ENCODE measurements at regions of chr1 and their contacts with region 1.

Region 1: DNA sequence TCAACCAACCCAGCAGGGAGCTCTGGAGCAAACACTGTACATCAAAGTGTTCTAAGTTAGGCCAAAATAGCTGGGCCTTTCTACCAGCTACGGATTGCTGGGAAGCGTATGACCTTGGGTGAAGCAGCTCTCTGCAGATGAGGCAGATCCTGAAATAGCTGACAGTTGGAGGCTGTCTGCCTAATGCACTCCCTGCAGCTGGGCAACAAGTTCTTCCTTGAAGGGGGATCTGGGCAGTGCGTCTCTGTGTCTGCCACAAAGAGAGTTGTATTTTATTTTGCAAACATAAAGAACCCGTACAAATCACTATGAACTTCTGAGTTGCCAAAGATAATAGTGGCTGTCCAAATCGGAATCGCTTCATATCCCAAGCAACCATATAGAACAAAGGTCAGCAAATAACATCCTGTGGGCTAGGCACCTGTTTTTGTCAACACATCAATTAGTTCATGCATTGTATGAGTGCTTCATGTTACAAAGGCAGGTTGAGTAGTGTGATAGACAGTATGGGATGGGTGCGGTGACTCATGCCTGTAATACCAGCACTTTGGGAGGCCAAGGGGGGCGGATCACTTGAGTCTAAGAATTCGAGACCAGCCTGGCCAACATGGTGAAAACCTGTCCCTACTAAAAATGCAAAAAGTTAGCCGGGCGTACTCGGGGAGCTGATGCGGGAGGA is 29.1 kb upstream of the KLF17 start:
- DNase-seq: no peak
- ATAC-seq: 0 out of 2 replicates have a peak, but pooled peaks have one; percentile 14
- H3K4me3 ChIP-seq: no peak overlapping the region
- H3K27ac ChIP-seq: no peak overlapping the region
- H3K4me1 ChIP-seq: no peaks in the 10 kb centered on the region
- H3K27me3 ChIP-seq: peaks cover 2% of the 10 kb centered on the region; the same call in 1 of the 2 replicates
- CTCF ChIP-seq: no peak
- POLR2A ChIP-seq: no peak
- RAD21 ChIP-seq: no peak

Region 2: GRCh38 chr1:44105810-44106209 is 16.3 kb after region 1 on chr1:
- CTCF ChIA-PET with region 1: interaction called, 5 read pairs
- POLR2A ChIA-PET with region 1: no interaction called
- dilution Hi-C with region 1: no loop called
- in situ Hi-C with region 1: no loop called
- intact Hi-C with region 1: loop called (anchors 1 kb)
- DNase-seq: no peak
- ATAC-seq: no peak
- H3K4me3 ChIP-seq: no peak overlapping the region
- H3K27ac ChIP-seq: no peak overlapping the region
- H3K4me1 ChIP-seq: no peaks in the 10 kb centered on the region
- H3K27me3 ChIP-seq: no peaks in the 10 kb centered on the region; the same call in 1 of the 2 replicates
- CTCF ChIP-seq: no peak
- POLR2A ChIP-seq: no peak
- RAD21 ChIP-seq: no peak

Region 3: DNA sequence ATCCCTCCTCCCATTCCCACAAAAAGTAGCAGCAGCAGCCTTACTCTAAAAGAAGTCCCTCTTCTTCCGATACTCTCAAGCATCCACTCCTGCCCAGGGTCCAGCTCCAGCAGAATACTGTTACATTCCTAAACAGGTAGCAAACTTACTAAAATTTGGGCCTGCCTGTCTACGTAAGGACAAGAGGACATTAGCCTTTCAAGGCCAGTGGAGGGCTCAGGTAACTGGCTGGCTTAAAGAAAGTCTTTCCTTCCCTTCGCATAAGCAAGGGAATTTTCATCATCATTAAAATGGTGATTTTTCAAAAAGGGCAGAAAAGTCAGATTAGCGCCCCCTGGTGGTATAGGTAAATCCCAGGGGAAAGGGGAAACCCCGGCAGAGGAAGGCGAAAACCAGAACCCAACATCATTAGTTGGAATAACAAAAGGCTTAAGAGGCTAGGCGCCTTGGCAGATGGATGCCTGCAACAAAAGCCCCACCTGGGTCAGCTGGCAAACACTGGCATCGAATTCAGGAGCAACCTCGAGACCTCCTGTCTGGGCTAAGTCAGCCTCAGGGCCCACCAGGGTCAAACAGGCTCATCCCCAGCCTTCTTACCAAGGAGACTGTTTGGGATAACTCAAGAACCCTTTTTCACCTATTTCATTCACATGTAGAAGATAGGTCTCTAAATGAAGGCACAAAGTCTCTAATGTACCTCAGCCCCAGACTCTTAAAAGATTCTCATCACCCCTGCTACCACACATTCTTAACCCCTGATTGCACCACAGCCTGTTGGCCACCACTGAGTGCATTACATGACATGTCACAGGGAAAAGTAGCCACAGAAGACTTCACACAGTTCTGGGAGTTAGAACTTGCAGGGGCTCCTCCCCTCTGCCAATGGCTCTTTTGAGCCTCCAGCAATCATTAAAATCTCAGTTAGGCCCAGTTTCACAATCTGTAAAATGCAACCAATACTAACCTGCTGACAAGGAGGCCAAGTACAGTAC is 228.9 kb after region 1 on chr1:
- CTCF ChIA-PET with region 1: no interaction called
- POLR2A ChIA-PET with region 1: no interaction called
- dilution Hi-C with region 1: no loop called
- in situ Hi-C with region 1: no loop called
- intact Hi-C with region 1: loop called (anchors 5 kb)
- DNase-seq: peak; percentile 23
- ATAC-seq: peak; percentile 68
- H3K4me3 ChIP-seq: no peak overlapping the region
- H3K27ac ChIP-seq: no peak overlapping the region
- H3K4me1 ChIP-seq: no peaks in the 10 kb centered on the region
- H3K27me3 ChIP-seq: no peaks in the 10 kb centered on the region
- CTCF ChIP-seq: peak; percentile 74
- POLR2A ChIP-seq: no peak
- RAD21 ChIP-seq: peak; percentile 56

Region 4: DNA sequence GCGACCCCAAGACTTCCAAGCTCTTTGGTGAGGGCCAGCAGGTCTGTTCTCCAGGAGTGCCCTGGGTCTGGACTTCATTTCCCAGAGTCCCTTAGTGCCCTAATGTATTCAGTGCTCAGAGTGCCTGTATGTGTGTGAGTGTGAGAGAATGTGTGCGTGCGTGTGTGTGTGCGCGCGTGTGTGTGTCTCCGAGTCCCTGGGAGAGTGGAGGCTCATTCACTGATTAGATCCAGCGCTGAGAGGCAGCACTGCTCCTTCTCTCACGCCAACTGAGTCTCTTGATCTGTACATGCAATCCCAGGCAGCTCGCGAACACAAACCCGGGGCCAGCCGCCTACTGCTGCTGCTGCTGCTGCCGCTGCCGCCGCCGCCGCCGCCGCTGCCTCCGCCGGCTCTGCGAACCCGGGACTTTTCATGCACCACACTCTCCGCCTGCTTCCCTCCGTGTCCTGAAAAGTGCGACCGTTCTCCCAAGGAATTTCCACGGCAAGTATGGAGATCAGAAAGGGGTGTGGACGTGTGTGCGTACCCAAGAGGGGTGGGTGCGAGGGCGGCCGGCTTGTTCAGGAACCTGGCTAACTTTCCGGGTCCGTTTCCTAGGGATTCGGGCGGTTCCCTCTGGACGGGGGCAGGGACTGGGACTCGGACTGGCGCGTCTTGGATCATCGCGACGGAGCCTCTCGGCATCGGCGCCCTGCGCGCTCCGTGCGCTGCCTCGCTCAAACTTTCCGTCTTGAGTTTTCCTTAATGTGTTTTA is 315.7 kb after region 1 on chr1 and contains the start of gene RNF220:
- CTCF ChIA-PET with region 1: no interaction called
- POLR2A ChIA-PET with region 1: no interaction called
- dilution Hi-C with region 1: no loop called
- in situ Hi-C with region 1: no loop called
- intact Hi-C with region 1: no loop called
- DNase-seq: peak; percentile 52
- ATAC-seq: peak; percentile 74
- H3K4me3 ChIP-seq: peak within 1 kb of the TSS; percentile 28
- H3K27ac ChIP-seq: no peak within 1 kb of the TSS
- H3K4me1 ChIP-seq: no peaks in the 10 kb centered on the region
- H3K27me3 ChIP-seq: peaks cover 79% of the 10 kb centered on the region
- CTCF ChIP-seq: no peak
- POLR2A ChIP-seq: no peak
- RAD21 ChIP-seq: no peak
- total RNA-seq, gene RNF220: 76.7 and 77.1 TPM in 2 replicates